ENCODE measurements at regions of chr14 and their contacts with region 1.

Region 1: GRCh38 chr14:25237845-25238244 is 187.9 kb upstream of the STXBP6 start:
- DNase-seq: peak; percentile 7 to 55
- H3K4me3 ChIP-seq: no peak overlapping the region
- H3K27ac ChIP-seq: no peak overlapping the region
- H3K4me1 ChIP-seq: peaks cover 0 to 3% (median 0%) of the 10 kb centered on the region in 4 experiments; a peak in 1 of 7 replicates
- H3K27me3 ChIP-seq: no peaks in the 10 kb centered on the region; a peak in 2 of 7 replicates
- CTCF ChIP-seq: peak in 2 of 3 experiments; percentile 44 to 57; a peak in 2 of 4 replicates
- EP300 ChIP-seq: no peak
- POLR2A ChIP-seq: no peak
- RAD21 ChIP-seq: peak; percentile 73 to 78

Region 2: DNA sequence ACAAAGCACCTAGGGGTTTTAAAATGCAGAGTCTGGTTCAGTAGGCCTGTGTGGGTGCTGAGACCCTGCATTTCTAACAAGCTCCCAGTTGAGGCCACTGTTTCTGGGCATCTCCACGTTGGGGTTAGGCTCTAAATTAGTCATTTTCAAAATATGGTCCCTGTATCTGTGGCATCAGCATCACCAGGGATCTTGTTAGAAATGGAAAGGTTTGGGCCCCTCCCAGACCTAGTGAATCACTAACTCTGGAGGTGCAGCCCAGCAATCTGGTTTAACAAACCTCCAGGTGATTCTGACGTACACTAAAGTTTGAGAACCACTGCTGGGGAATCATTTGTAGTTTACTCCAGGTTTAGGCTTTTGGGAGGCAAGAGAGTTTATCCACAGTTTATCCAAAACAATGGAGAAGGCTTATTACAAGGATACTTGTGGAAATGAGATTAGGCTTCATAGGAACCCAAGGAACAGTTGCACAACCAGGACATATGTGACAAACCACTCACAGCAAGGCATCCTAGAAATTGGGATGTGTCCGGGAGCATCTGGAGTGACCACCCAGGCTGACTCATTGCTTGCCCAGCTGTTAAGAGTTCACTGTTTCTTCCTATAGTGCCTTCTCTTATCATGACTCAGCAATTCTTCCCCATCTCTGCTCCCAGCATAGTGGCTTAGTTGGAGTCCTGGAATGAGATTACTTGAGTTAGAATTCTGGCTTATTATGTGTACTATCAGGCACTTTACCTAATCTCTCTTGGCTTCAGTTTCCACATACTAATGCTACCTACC is 116.3 kb before region 1 on chr14:
- CTCF ChIA-PET with region 1: no interaction called
- POLR2A ChIA-PET with region 1: no interaction called
- DNase-seq: no peak
- H3K4me3 ChIP-seq: no peak overlapping the region
- H3K27ac ChIP-seq: no peak overlapping the region
- H3K4me1 ChIP-seq: peaks cover 0 to 3% (median 0%) of the 10 kb centered on the region in 4 experiments; a peak in 1 of 7 replicates
- H3K27me3 ChIP-seq: no peaks in the 10 kb centered on the region
- CTCF ChIP-seq: no peak
- EP300 ChIP-seq: no peak
- POLR2A ChIP-seq: no peak
- RAD21 ChIP-seq: no peak

Region 3: GRCh38 chr14:25222256-25222655 is 15.6 kb before region 1 on chr14:
- CTCF ChIA-PET with region 1: interaction called, 24 read pairs
- POLR2A ChIA-PET with region 1: no interaction called
- DNase-seq: no peak
- H3K4me3 ChIP-seq: no peak overlapping the region
- H3K27ac ChIP-seq: no peak overlapping the region
- H3K4me1 ChIP-seq: no peaks in the 10 kb centered on the region
- H3K27me3 ChIP-seq: no peaks in the 10 kb centered on the region
- CTCF ChIP-seq: no peak
- EP300 ChIP-seq: no peak
- POLR2A ChIP-seq: no peak
- RAD21 ChIP-seq: no peak

Region 4: GRCh38 chr14:25250516-25250915 is 12.7 kb after region 1 on chr14:
- CTCF ChIA-PET with region 1: interaction called, 14 read pairs
- POLR2A ChIA-PET with region 1: no interaction called
- DNase-seq: no peak
- H3K4me3 ChIP-seq: no peak overlapping the region
- H3K27ac ChIP-seq: no peak overlapping the region
- H3K4me1 ChIP-seq: no peaks in the 10 kb centered on the region
- H3K27me3 ChIP-seq: no peaks in the 10 kb centered on the region
- CTCF ChIP-seq: no peak
- EP300 ChIP-seq: no peak
- POLR2A ChIP-seq: no peak
- RAD21 ChIP-seq: no peak

Measured in H1 (cell line).